ENCODE measurements at regions of chr4 and their contacts with region 1.

Region 1: GRCh38 chr4:80215449-80216052 is 18.2 kb downstream of the PRDM8 start:
- DNase-seq: no peak
- ATAC-seq: peak; percentile 62; the same call in 1 of the 2 replicates
- H3K4me3 ChIP-seq: no peak overlapping the region
- H3K27ac ChIP-seq: no peak overlapping the region
- H3K4me1 ChIP-seq: no peaks in the 10 kb centered on the region
- H3K27me3 ChIP-seq: peaks cover 31% of the 10 kb centered on the region
- CTCF ChIP-seq: peak; percentile 41 to 75 (median 74); a peak in 4 of 6 replicates
- POLR2A ChIP-seq: no peak
- RAD21 ChIP-seq: peak; percentile 70

Region 2: DNA sequence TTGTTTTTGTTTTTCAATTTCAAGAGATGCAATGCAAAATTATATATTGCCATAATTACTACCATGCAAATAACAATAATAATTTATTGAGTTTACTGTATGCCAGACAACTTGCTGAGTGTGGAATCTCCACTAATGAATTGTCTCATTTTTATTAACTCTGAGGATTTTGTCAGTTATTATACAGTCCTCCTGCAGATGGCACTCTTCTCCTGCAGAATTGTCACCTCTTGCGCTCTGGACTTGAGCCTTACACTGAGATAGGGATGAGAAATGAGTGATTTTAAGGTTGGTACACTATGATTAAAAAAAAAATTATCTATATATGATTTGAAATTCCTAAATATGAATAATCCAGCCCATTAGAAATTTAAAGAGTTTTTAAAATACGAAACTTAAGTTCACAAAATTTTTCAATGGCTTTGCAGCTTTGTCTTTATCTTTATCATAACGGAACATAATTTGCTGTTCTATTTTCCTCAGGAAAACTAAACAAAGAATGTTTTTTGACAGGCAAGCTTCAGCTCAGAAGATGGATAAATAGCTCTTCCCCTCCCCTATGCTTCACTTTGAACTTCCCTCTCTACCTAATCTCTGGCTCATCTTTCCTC is 1263.6 kb before region 1 on chr4:
- CTCF ChIA-PET with region 1: interaction called, 3 read pairs
- POLR2A ChIA-PET with region 1: no interaction called
- RAD21 ChIA-PET with region 1: no interaction called
- intact Hi-C with region 1: loop called (anchors 1 kb)
- DNase-seq: peak; percentile 32
- ATAC-seq: peak; percentile 81
- H3K4me3 ChIP-seq: no peak overlapping the region
- H3K27ac ChIP-seq: no peak overlapping the region
- H3K4me1 ChIP-seq: no peaks in the 10 kb centered on the region
- H3K27me3 ChIP-seq: no peaks in the 10 kb centered on the region
- CTCF ChIP-seq: peak; percentile 55 to 72 (median 57); a peak in 5 of 6 replicates
- POLR2A ChIP-seq: no peak
- RAD21 ChIP-seq: peak; percentile 83

Region 3: GRCh38 chr4:79042079-79042674 is 1173.4 kb before region 1 on chr4:
- CTCF ChIA-PET with region 1: interaction called, 3 read pairs
- POLR2A ChIA-PET with region 1: no interaction called
- RAD21 ChIA-PET with region 1: no interaction called
- intact Hi-C with region 1: loop called (anchors 1 kb)
- DNase-seq: peak; percentile 13
- ATAC-seq: peak; percentile 62
- H3K4me3 ChIP-seq: no peak overlapping the region
- H3K27ac ChIP-seq: no peak overlapping the region
- H3K4me1 ChIP-seq: no peaks in the 10 kb centered on the region
- H3K27me3 ChIP-seq: peaks cover 17% of the 10 kb centered on the region; the same call in 1 of the 2 replicates
- CTCF ChIP-seq: peak; percentile 31 to 65 (median 48); a peak in 4 of 6 replicates
- POLR2A ChIP-seq: no peak
- RAD21 ChIP-seq: peak; percentile 72

Region 4: DNA sequence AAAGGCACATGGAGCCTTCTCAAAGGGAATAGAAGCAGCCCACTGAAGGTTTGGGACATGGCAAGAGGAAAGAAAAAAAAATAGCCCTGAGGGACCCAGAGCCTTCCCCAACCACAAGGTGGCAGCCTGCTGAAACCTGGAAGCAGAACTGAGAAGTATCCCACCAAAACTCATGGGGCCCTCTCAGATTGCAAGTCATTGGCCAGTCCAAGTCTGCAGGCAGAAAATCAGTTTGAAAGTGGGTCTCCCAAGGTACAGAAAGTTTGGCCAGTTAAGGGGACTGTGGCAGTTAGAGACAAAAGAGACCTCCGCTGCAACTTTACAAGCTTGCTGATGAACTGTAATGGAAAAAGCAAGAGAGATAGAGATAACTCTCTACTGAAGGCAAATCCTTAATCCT is 298.3 kb before region 1 on chr4:
- CTCF ChIA-PET with region 1: no interaction called
- POLR2A ChIA-PET with region 1: no interaction called
- RAD21 ChIA-PET with region 1: no interaction called
- intact Hi-C with region 1: loop called (anchors 1 kb)
- DNase-seq: peak; percentile 42
- ATAC-seq: peak; percentile 80
- H3K4me3 ChIP-seq: no peak overlapping the region
- H3K27ac ChIP-seq: no peak overlapping the region
- H3K4me1 ChIP-seq: no peaks in the 10 kb centered on the region
- H3K27me3 ChIP-seq: no peaks in the 10 kb centered on the region
- CTCF ChIP-seq: peak; percentile 52 to 79 (median 75); a peak in 5 of 6 replicates
- POLR2A ChIP-seq: no peak
- RAD21 ChIP-seq: peak; percentile 52